ENCODE measurements at regions of chr12 and their contacts with region 1.

Region 1: GRCh38 chr12:45728630-45729232 is 775 bp upstream of the ARID2 start:
- DNase-seq: peak; percentile 86
- H3K4me3 ChIP-seq: peak overlapping the region; percentile 90 to 93
- H3K27ac ChIP-seq: peak overlapping the region; percentile 94 to 99
- H3K4me1 ChIP-seq: peaks cover 10 to 17% of the 10 kb centered on the region in 2 experiments; a peak in 3 of 4 replicates
- H3K27me3 ChIP-seq: no peaks in the 10 kb centered on the region
- CTCF ChIP-seq: peak; percentile 81
- EP300 ChIP-seq: peak; percentile 50 to 54; a peak in 2 of 4 replicates
- RAD21 ChIP-seq: peak; percentile 49

Region 2: GRCh38 chr12:45215419-45216229 is 513.1 kb before region 1 on chr12 and contains the start of gene ANO6:
- CTCF ChIA-PET with region 1: interaction called, 18 read pairs
- POLR2A ChIA-PET with region 1: interaction called, 9 read pairs
- DNase-seq: peak; percentile 87
- H3K4me3 ChIP-seq: peak within 1 kb of the TSS; percentile 86 to 92
- H3K27ac ChIP-seq: peak within 1 kb of the TSS; percentile 98 to 99
- H3K4me1 ChIP-seq: peaks cover 0 to 3% of the 10 kb centered on the region in 2 experiments; a peak in 2 of 4 replicates
- H3K27me3 ChIP-seq: no peaks in the 10 kb centered on the region
- CTCF ChIP-seq: peak; percentile 49
- EP300 ChIP-seq: 0 out of 4 replicates have a peak, but pooled peaks have one; percentile 12 to 14
- RAD21 ChIP-seq: peak; percentile 58
- polyA plus RNA-seq, gene ANO6: 20.1 and 26.7 TPM in 2 replicates

Region 3: DNA sequence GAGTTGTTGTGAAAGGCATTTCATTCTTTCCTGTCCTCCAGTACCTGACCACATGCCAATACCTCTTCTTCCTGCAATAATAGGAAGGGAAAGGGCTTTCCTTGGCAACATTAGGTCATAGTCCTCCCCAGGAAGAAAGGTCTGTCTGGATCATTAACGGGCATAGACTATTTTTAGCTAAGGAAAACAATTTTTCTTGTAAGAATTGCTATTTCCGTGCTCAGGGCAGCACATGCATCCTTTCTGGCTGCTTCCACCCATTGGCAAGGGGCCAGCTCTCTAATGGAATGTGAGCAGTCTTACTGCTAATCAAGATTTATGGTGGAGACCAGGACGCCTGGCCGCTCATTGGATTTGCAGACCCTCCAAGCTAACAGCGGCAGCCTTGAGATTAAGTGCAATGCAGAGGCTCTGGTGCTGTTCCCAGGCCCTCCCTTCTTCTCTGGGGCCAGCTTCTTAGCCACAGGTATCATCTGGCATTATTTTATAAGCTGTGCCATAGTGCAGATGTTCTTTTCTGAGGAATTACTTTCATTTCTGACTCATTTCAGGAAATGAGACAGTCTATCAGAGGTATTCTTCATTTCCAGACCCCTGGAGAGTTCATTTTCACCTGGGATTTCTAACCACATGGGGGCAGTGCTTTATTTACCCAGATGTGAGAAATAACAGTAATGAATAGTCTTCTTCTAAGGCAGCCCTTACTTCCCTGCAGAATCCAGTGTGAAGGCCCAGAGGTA is 459.9 kb before region 1 on chr12:
- CTCF ChIA-PET with region 1: interaction called, 12 read pairs
- POLR2A ChIA-PET with region 1: no interaction called
- DNase-seq: peak; percentile 58
- H3K4me3 ChIP-seq: peak overlapping the region; percentile 19 to 31; a peak in 2 of 4 replicates
- H3K27ac ChIP-seq: peak overlapping the region; percentile 87 to 93
- H3K4me1 ChIP-seq: peaks cover 19 to 26% of the 10 kb centered on the region in 2 experiments
- H3K27me3 ChIP-seq: no peaks in the 10 kb centered on the region
- CTCF ChIP-seq: peak; percentile 72
- EP300 ChIP-seq: peak; percentile 82 to 84
- RAD21 ChIP-seq: peak; percentile 77

Region 4: GRCh38 chr12:45543906-45544315 is 184.8 kb before region 1 on chr12:
- CTCF ChIA-PET with region 1: interaction called, 70 read pairs
- POLR2A ChIA-PET with region 1: interaction called, 5 read pairs
- DNase-seq: peak; percentile 69
- H3K4me3 ChIP-seq: no peak overlapping the region; a peak in 1 of 4 replicates
- H3K27ac ChIP-seq: no peak overlapping the region
- H3K4me1 ChIP-seq: no peaks in the 10 kb centered on the region; a peak in 1 of 4 replicates
- H3K27me3 ChIP-seq: no peaks in the 10 kb centered on the region
- CTCF ChIP-seq: peak; percentile 78
- EP300 ChIP-seq: no peak
- RAD21 ChIP-seq: peak; percentile 87

Region 5: DNA sequence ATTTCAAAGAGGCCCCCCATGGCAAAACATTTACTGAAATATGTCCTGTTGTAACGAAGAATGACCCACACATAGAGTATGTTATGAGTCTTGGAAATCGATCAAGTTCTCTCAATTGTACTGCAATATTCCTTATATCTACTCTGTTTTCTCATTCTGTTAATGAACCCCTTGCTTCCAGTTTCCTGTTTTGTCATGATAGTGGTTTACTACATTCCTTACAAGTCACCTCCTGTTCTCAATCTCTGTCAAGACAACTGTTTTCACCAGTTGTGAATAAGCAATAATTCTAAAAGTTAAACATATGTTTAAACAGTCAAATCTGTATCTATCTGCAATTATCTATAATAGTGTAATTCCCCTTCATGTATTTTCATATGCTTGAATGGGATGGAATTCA is 15.7 kb before region 1 on chr12:
- CTCF ChIA-PET with region 1: interaction called, 25 read pairs
- POLR2A ChIA-PET with region 1: interaction called, 3 read pairs
- DNase-seq: no peak
- H3K4me3 ChIP-seq: no peak overlapping the region
- H3K27ac ChIP-seq: no peak overlapping the region
- H3K4me1 ChIP-seq: no peaks in the 10 kb centered on the region
- H3K27me3 ChIP-seq: no peaks in the 10 kb centered on the region
- CTCF ChIP-seq: no peak
- EP300 ChIP-seq: no peak
- RAD21 ChIP-seq: no peak

Region 6: DNA sequence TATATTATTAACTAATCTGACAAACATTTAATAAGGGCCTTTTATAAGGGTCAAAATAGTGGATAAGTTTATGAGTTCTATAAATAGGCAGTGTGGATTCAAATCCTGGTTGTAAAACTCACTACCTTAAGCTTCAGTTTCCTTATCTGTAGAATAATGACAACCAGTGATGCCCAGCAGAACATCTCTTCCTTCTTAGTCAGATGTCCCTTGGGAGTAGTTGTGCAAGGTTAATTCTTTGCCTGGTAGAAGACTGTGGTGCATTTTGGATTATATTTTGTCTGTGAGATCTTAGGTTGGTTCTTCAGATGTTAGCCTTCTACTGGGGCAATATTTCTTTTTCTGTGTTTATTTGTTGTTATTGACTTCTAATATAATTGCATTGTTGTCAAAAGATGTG is 60.3 kb after region 1 on chr12:
- CTCF ChIA-PET with region 1: no interaction called
- POLR2A ChIA-PET with region 1: no interaction called
- DNase-seq: peak; percentile 6
- H3K4me3 ChIP-seq: no peak overlapping the region
- H3K27ac ChIP-seq: no peak overlapping the region
- H3K4me1 ChIP-seq: peaks cover 0 to 10% of the 10 kb centered on the region in 2 experiments; a peak in 2 of 4 replicates
- H3K27me3 ChIP-seq: no peaks in the 10 kb centered on the region
- CTCF ChIP-seq: no peak
- EP300 ChIP-seq: no peak
- RAD21 ChIP-seq: no peak

Region 7: DNA sequence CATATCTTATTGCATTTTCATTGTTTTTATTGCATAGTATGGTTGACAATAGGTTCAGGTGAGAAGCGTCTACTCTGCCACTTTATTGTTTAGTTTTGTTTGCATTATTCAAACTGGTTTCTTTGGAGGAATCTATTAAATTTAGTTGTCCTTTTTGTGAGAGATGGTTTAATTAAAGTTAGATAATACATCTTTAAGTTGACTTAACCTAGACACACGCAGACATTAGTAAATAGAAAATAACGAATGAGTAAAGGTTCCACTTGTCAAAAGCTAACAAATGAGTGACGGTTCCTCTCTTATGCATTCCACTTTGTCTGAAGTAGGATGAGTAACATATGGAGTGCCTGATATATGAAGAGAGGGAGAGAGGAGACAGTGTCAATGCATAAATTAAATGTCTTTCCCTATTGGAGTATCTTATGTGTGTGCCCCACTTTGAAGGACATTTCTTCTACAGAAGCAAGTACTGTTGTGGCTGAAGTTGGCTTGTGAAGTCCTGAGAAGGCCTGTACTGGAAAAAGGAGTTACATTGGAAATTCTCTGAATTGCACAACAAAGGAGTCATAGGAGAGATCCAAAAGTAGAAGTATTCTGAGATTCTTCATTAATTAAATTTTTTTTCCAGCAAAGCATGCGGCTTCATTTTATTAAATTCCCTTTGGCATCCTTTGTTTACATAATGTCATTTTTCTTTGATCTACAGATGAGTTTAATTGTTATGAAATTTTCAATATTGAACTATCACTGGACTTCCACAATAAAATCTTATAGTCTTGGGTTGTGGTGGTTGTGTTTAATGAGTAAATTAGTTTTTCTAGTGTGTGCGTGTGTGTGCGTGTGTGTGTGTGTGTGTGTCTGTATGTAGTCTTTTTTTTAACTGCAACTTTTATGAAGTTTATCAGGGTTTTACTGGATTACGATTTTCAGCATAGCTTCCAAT is 75.2 kb after region 1 on chr12:
- CTCF ChIA-PET with region 1: no interaction called
- POLR2A ChIA-PET with region 1: no interaction called
- DNase-seq: no peak
- H3K4me3 ChIP-seq: no peak overlapping the region
- H3K27ac ChIP-seq: no peak overlapping the region
- H3K4me1 ChIP-seq: no peaks in the 10 kb centered on the region; a peak in 1 of 4 replicates
- H3K27me3 ChIP-seq: no peaks in the 10 kb centered on the region
- CTCF ChIP-seq: no peak
- EP300 ChIP-seq: no peak
- RAD21 ChIP-seq: no peak

Region 8: GRCh38 chr12:45990468-45991283 is 261.9 kb after region 1 on chr12 and contains the start of gene SCAF11:
- CTCF ChIA-PET with region 1: interaction called, 14 read pairs
- POLR2A ChIA-PET with region 1: interaction called, 4 read pairs
- DNase-seq: peak; percentile 95
- H3K4me3 ChIP-seq: peak within 1 kb of the TSS; percentile 91 to 94
- H3K27ac ChIP-seq: peak within 1 kb of the TSS; percentile 97 to 98
- H3K4me1 ChIP-seq: peaks cover 7 to 13% of the 10 kb centered on the region in 2 experiments; a peak in 3 of 4 replicates
- H3K27me3 ChIP-seq: no peaks in the 10 kb centered on the region
- CTCF ChIP-seq: peak; percentile 89
- EP300 ChIP-seq: peak; percentile 9 to 65; a peak in 3 of 4 replicates
- RAD21 ChIP-seq: peak; percentile 92
- polyA plus RNA-seq, gene SCAF11: 26.1 and 32.3 TPM in 2 replicates

Measured in SK-N-SH (cell line).